Cardiac septum (tissue), 1 donor: ENCODE measurements at regions of chr10 and their contacts with region 1.

Region 1: GRCh38 chr10:100286051-100287033 is at the start of gene BLOC1S2:
- DNase-seq: peak; percentile 96
- total RNA-seq, gene BLOC1S2: 27.8 TPM

Region 2: DNA sequence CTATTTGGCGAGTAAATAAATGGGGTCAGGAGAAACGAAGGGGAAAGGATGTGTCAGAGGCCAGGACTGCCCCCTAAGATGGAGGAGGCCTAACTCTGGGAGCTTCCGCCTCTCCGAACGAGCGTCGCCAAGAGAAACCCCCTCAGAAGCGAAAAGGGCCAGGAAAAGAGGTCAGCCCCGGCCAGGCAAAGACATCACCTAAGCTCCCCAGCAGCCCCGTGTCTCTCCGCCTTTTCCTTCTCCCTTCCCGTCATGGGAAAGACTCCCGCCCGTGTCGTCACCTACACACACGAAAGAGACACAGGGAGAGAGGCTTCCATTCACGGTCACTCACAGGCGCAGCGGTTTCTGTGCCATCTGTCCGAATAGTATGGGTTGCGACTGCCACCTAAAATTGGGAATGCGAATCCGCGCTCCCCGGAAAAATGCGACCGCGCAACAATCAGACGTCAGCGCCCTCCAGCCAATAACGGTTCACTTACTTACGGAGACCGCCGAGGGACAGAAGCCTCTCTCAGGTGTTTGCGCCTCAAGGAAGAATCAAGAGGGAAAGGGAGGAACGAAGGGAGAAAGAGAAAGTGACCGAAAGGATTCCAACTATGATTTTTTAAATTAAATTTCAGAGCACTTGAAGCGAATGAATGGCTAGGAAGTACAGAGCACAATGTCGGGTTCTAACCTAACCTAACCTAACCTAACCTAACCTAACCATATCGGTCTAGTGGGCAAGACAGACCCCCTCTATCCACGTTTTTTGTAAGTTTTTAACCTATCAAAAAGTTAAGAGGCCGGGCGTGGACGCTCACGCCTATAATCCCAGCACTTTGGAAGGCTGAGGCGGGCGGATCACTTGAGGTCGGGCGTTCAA is 18.9 kb before region 1 on chr10 and contains the start of gene CWF19L1:
- intact Hi-C with region 1: loop called (anchors 2 kb)
- DNase-seq: peak; percentile 94
- total RNA-seq, gene CWF19L1: 15.9 TPM

Region 3: DNA sequence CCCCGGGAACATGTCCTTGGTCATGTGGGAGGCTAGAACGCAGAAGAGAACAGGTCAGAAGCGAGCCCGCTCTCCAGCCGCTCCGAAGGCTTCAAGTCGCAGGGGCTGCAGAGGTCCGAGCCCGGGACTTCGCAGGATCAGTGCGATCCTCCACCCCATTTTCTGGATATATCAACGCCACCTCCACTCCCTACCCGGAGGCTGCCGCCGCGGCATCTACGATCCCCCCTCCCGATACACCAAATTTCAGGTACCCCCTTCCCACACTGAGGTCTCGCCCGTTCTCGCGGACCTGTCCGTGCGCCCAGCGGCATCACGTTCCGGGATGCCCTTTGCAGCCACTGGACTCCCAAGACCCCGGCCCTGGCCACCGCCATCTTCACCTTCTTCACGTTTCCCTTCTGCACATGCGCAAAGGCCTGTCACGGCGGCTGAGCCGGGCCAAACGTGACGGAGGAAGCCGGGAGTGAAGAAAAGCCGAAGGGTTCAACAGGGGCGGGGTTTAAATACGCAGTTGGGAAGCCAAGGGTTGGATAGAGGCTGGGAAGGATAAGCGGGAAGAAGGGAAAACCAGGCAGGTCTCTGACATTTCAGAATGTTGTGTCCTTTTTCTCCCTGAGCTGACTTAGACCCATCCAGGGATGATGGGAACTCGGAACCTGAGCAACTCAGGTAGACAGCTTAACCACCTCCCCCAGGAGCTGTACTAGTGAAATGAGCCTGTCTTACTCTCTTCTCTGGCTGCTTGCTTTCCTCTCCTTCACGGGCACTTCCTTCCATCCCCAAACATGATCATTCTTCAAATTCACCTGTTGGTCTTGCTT is 243.3 kb after region 1 on chr10 and contains the start of gene NDUFB8:
- intact Hi-C with region 1: loop called (anchors 5 kb)
- DNase-seq: peak; percentile 94
- total RNA-seq, gene NDUFB8: 351 TPM